Right ventricle myocardium superior (tissue), 1 donor: ENCODE measurements at regions of chr17 and their contacts with region 1.

Region 1: DNA sequence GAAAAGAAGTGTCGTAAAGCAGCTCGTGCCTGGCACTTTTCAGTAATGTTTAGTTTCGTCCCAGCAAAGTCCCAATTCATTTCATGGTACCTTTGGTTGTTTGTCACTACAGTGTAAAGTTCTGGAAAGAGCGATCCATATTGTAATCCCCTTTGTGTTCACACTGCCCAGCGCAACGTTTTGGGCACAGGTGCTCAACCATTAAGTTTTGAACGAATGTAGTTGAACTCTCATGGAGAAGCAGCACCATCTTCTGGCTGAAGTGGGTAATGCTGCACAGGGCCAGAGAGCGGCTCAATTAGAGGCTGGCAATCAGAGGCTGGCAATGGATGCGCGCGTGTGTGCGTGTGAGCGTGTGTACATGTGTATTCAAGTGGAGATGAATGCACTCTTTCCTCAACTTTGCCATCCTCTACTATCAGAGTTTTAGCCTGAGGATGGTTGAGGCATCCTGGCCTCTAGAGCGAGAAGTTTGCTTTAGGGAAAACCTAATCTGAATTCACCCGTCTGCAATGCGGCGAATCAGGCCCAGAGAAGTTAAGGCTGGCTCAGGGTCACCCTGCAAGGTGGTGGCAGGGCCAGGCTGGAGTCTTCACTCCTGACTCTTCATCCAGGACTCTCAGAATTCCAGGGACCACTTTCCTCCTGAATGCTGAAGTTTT is 29.9 kb downstream of the DYNLL2 start:
- DNase-seq: peak; percentile 82
- ATAC-seq: peak; percentile 95

Region 2: DNA sequence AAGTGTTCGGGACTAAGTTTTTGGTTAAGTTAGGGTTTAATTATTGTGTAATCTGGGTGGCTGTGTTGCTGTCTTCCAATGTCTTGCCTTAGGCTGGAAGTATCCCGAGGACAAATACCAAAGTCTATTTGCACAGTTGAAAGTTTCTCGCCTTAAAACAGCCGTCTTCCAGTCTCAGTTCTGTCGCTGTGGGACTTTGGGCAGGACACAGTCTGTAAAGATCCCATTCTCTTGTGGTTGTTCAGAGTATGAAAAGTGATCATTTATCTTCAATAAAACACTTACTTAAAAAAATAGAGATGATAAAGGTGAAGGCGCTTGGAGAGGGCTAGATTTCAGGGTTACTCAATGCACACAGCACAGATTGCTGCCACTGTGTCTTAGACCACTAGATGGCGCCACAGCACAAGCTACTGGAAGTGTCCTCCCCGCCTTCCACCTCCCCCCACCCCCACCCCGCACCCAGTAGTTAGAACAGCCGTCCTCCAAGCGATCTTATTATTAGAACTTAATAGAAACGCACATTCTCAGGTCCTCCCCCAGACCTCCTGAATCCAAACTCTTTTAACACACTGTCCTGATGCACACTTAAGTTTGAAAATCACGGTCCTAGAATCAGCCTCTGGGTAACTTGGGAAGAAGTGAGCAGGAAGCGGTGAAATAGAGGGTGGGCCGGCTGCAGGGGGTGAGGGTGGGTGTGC is 982.2 kb before region 1 on chr17:
- intact Hi-C with region 1: loop called (anchors 10 kb)
- DNase-seq: peak; percentile 86
- ATAC-seq: peak; percentile 96

Region 3: DNA sequence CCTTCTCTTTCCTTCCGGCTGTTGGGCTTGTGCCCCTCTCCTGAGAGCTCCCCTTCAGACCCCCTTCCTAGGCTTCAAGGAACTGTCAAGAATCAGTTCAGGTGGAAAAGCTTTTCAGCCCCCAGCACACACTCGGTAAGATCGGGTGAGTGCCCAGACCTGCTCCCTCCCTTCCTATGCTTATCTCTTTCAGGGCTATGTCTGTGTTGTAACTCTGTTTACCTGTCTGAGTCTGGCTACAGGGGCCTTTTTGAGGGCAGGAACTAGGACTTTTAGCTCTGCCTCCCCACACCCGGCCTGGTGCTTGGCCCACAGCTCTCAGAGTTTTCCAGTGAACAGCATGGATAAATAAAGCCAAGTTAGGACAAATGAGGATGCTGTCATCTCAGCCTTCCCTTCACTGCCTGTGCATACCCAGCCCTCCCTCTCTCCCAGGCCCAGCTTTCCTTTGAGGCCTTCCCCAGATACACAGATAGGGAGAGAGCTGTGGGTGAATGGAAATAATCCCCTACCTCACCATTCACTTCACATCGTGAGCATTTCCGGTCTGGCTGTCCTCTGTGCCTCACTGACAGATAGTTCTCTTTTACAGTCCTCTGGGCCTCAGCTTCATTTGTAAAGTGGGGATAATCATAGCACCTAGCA is 257.6 kb before region 1 on chr17:
- intact Hi-C with region 1: loop called (anchors 5 kb)
- DNase-seq: no peak
- ATAC-seq: no peak

Region 4: DNA sequence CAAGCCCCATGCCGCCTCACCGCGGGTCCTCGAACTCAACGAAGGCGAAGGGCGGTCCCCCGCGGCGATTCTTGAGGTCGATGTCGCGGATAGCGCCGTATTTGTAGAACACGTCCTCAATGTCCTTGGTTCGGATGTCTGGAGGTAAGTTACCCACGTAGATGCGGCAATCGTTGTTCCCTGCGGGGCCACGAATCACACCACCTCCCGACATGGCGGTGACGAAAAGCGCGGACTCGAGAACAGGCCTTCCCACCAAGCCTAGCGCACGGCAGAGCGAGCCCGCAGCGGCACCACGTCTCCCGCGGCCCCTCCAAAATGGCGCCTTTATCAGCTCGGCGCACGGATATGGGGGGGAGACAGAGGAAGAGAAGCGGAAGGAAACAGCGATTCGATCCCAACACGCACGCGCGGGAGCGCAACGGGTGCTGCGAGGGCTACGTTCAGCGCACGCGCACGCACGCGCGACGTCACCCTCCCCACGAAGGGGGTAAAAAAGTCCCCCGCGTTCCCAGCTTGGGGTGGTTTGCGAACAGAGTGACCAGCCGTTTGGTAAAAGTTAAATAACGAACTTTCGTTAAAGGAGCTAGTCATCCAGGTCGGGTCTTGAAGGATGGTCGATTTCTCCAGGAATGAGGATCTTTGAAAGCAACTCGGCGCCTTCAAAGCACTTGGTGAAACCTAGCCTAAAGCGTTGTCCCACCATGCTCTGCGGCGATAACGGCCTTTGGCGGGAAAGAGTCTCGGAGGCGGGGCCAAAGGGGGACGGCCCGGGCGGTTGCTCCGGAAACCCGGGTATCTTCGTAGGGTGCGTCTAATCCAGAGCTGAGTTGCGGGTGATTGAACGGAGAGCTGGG is 105.9 kb before region 1 on chr17 and contains the start of gene SRSF1:
- intact Hi-C with region 1: loop called (anchors 5 kb)
- DNase-seq: peak; percentile 99
- ATAC-seq: peak; percentile 97
- total RNA-seq, gene SRSF1: 90.9 TPM

Region 5: DNA sequence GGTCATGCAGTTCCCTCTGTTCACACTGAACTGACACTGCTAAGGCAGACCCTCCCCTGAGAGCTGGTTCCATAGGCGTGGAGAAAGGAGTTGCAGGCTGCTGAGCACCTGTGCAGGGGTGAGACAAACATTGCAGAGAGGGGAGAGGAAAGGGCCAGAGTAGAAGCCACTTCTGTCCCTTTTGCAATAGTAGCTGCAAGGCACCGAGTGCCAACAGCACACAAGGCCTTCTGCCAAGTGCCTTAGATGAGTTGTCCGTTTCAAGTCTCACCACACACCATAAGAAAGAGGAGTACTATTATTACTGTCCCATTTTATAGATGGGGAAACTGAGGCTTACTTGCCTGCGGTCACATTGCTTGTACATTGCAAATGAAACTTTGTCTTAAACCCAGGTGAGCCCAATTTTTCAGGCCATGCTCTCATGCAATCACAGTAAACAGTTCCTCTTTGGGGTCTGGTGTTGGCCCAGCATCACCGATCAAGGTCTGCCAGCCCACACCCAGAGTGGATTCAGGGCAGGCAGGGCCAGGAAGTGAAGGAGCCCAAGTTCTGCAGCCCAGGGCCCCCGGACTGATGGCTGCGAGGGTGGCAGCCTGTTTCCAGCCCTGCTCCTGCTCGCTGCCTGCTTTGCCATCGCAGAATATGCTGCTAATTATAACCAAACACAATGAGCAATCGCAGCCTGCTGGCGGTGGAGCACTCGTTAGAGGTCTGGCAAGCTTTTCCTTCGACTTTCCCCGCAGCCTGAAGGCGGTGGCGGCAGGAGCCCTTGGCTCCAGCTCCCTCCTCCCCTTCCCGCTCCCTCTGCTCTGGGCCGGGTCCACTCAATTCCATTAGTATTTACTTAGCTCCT is 66.6 kb before region 1 on chr17:
- intact Hi-C with region 1: no loop called
- DNase-seq: peak; percentile 50
- ATAC-seq: peak; percentile 92

Region 6: GRCh38 chr17:58072862-58073261 is 40.2 kb before region 1 on chr17:
- intact Hi-C with region 1: no loop called
- DNase-seq: no peak
- ATAC-seq: no peak